WTC11 (cell line): ENCODE measurements at regions of chr5 and their contacts with region 1.

Region 1: DNA sequence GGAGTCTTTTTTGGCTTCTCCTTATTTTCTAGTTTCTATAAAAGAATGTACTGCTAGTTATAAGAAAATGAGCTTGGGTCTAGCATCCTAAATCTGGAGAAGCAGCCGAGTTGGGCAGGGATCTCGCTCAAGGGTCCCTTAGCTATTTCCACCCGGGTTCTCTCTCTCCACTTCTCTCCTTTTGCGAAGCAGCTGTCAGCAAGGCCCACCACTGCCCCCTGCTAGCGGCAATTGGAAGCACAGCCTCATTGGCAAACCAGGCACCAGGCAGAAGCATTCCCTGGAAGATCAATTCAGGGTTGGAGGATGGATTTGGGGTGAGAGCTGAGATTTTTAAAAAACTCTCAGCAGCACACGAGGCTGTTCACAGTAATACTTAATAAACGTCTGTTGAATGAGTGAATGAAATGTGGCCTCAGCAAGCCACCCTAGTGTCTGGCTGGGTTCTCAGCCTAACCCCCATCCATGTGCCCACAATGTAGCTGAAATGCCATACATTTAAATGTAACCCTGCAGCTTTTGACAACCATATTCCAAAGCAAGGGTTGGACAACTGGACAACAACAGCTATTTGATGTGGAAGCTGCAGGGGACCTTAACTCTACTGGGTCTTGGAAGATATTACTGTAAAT is 34.6 kb upstream of the TNIP1 start:
- DNase-seq: peak; percentile 88
- ATAC-seq: peak; percentile 86
- H3K4me3 Mint-ChIP-seq: no peak overlapping the region
- H3K27ac Mint-ChIP-seq: no peak overlapping the region
- H3K4me1 Mint-ChIP-seq: no peaks in the 10 kb centered on the region
- H3K27me3 Mint-ChIP-seq: no peaks in the 10 kb centered on the region; the same call in 1 of the 2 replicates
- CTCF ChIP-seq: peak; percentile 87

Region 2: DNA sequence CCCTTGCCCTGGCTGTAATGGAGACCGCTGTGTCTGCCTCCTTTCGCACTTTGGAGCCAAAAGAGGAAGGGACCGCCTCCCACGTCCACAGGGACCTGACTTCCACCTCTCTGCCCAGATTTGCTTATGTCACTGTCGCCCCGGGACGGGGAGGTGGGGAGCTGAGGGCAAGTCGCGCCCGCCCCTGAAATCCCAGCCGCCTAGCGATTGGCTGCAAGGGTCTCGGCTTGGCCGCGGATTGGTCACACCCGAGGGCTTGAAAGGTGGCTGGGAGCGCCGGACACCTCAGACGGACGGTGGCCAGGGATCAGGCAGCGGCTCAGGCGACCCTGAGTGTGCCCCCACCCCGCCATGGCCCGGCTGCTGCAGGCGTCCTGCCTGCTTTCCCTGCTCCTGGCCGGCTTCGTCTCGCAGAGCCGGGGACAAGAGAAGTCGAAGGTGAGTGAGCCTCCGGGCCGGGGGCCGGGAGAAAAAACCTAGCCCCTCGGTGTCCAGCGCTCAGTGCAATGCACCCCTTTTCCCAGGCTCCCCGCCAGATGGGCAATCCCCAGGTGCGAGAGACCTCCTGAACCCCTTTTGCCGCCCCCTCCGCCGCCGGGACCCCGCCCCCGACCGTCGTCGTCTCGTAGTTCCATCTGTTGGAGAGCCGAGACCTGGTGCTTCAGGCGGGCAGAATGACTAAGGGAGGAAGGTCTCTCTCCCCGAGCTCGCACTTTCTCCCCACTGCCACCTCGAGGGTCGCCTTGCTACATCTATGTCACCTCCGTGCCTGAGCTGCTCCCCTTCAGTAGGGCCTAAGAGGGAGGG is 94.9 kb before region 1 on chr5 and contains the start of gene GPX3:
- CTCF ChIA-PET with region 1: interaction called, 12 read pairs
- POLR2A ChIA-PET with region 1: no interaction called
- DNase-seq: peak; percentile 89
- ATAC-seq: peak; percentile 99
- H3K4me3 Mint-ChIP-seq: peak within 1 kb of the TSS; percentile 77
- H3K27ac Mint-ChIP-seq: no peak within 1 kb of the TSS
- H3K4me1 Mint-ChIP-seq: peaks cover 4% of the 10 kb centered on the region
- H3K27me3 Mint-ChIP-seq: peaks cover 52% of the 10 kb centered on the region
- CTCF ChIP-seq: no peak
- total RNA-seq, gene GPX3: 24.5 to 26.9 TPM (median 26.2 TPM) in 3 replicates

Region 3: DNA sequence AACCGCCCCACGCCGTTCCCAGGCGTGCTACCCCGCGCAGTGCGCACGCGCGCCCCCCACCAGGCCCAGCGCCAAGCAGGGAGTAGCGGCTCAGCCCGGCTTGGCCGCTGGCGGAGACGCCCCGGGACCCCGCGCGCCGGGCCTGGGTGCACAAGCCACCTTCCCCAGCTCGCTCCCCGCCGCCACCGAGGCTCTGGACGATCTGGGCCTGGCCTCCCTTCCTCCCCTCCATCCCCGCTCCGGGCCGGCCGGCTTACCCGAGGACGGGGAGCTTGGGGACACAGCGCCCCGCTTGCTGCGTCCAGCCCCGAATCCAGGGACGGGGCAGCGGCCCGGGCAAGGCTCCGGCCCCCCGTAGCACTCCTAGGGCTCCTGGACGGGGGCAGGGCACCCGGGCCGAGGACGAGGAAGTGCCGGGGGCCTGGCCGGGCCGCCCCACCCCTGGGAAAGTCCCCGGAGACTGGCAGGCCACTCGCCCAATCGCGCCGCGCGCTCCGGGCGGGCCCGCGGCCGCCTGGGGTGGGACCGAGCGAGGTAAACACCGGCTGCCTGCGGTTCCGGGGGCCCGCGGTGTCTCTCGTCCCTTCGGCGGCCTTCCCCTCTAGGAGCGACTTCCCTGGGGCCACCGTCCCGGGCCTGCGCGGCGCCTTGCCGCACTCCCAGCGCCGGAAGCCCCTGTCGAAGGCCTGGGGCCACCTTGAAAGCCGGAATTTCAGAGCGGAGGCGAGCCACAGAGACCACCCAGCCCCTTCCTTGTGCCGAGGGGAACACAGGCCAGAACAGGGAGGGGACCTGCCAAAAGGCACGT is 34.6 kb before region 1 on chr5 and contains the start of gene TNIP1:
- CTCF ChIA-PET with region 1: interaction called, 45 read pairs
- POLR2A ChIA-PET with region 1: no interaction called
- DNase-seq: peak; percentile 82
- ATAC-seq: peak; percentile 76
- H3K4me3 Mint-ChIP-seq: peak within 1 kb of the TSS; percentile 83
- H3K27ac Mint-ChIP-seq: peak within 1 kb of the TSS; percentile 84; the same call in 1 of the 2 replicates
- H3K4me1 Mint-ChIP-seq: peaks cover 32% of the 10 kb centered on the region
- H3K27me3 Mint-ChIP-seq: no peaks in the 10 kb centered on the region
- CTCF ChIP-seq: no peak
- total RNA-seq, gene TNIP1: 41.1 to 48.9 TPM (median 47.0 TPM) in 3 replicates

Region 4: GRCh38 chr5:151126199-151126645 is 10.8 kb after region 1 on chr5:
- CTCF ChIA-PET with region 1: interaction called, 56 read pairs
- POLR2A ChIA-PET with region 1: interaction called, 4 read pairs
- DNase-seq: peak; percentile 77
- ATAC-seq: peak; percentile 80
- H3K4me3 Mint-ChIP-seq: no peak overlapping the region
- H3K27ac Mint-ChIP-seq: no peak overlapping the region
- H3K4me1 Mint-ChIP-seq: peaks cover 1% of the 10 kb centered on the region; the same call in 1 of the 2 replicates
- H3K27me3 Mint-ChIP-seq: no peaks in the 10 kb centered on the region
- CTCF ChIP-seq: peak; percentile 86

Region 5: GRCh38 chr5:151174612-151175101 is 59.3 kb after region 1 on chr5:
- CTCF ChIA-PET with region 1: no interaction called
- POLR2A ChIA-PET with region 1: no interaction called
- DNase-seq: no peak
- ATAC-seq: peak; percentile 80
- H3K4me3 Mint-ChIP-seq: no peak overlapping the region
- H3K27ac Mint-ChIP-seq: peak overlapping the region; percentile 55; the same call in 1 of the 2 replicates
- H3K4me1 Mint-ChIP-seq: peaks cover 7% of the 10 kb centered on the region
- H3K27me3 Mint-ChIP-seq: no peaks in the 10 kb centered on the region
- CTCF ChIP-seq: no peak

Region 6: DNA sequence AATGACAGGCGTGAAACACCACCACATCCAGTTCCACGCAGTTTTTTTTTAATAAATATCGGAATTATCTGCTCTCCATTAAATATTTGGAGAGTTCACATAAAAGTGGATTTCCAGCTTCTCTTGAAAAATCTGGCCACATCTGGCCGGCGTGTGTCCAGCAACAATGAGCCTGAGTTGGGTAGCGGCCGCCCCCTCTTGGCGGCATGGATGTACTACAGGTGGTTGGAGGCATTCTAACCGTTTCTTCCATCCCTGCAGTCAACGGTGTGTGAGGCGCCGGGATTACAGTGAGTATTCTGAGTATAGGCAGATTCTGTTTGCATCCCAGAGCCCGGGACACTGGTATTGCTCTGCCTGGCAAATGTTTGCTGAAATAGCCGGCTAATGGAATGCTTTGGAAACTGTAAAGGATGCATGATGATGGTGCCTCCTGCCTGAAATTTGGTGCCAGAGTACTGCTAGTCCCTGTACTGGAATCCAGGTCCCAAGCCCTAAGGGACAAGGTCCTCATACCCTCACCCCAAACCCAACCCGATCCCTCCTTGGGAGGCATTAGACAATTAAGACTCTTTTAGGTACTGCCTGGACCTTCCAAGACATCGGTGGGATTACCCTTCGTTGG is 124.0 kb after region 1 on chr5:
- CTCF ChIA-PET with region 1: interaction called, 15 read pairs
- POLR2A ChIA-PET with region 1: no interaction called
- DNase-seq: peak; percentile 81
- ATAC-seq: peak; percentile 83
- H3K4me3 Mint-ChIP-seq: no peak overlapping the region
- H3K27ac Mint-ChIP-seq: no peak overlapping the region; the same call in 1 of the 2 replicates
- H3K4me1 Mint-ChIP-seq: peaks cover 35% of the 10 kb centered on the region
- H3K27me3 Mint-ChIP-seq: no peaks in the 10 kb centered on the region
- CTCF ChIP-seq: peak; percentile 91